ENCODE measurements at regions of chr1 and their contacts with region 1.

Region 1: GRCh38 chr1:117059678-117060440 is at the start of gene TTF2:
- DNase-seq: peak; percentile 95
- H3K4me3 ChIP-seq: peak within 1 kb of the TSS; percentile 57 to 84 (median 64)
- H3K27ac ChIP-seq: peak within 1 kb of the TSS in 2 of 3 donors; percentile 20 to 30
- H3K4me1 ChIP-seq: peaks cover 6 to 8% of the 10 kb centered on the region in 2 donors
- H3K27me3 ChIP-seq: no peaks in the 10 kb centered on the region
- CTCF ChIP-seq: peak in 2 of 6 experiments; percentile 19 to 24
- POLR2A ChIP-seq: peak; percentile 7 to 20
- total RNA-seq, gene TTF2: 6.0 to 32.3 (median 17.2) TPM

Region 2: DNA sequence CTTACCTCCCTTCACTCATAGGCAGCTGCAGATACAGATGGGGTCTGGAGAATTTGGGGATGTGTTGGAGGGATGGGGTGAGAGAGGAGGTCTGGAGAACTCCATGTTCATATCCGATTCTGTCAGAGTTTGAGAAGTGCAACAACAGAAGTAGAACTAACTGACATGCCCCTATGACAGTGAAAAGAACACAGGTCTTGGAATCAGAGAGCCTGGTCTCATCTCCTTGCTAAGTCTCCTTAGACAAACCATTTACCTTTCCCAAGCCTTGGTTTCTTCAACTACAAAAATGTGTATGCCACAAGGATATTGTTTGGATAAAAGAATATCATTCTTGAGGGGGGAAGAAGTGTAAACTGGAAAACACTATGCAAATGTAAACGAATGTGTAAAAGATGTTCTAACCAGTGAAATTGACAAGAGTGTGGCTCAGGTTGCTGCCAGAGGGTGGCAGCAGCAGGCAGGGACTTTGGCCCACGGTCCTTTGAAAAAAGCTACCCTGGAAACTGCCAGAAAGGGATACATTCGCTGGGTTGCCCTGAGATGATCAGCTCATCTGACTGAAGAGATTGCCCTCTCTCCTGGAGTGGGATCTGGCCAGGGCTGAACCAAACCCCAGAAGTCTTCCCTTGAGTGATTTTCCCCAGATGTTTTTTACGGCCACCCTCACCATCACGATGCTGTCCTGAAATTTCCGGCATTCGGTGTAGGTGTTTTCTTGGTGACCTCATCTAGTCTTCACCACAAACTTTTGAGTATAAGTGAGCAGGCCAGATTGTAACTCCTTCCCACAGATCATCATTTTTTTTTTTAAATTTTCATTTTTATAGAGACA is 322.6 kb before region 1 on chr1:
- intact Hi-C with region 1: loop called (anchors 5 kb)
- DNase-seq: peak; percentile 40 to 59
- H3K4me3 ChIP-seq: no peak overlapping the region
- H3K27ac ChIP-seq: no peak overlapping the region
- H3K4me1 ChIP-seq: no peaks in the 10 kb centered on the region
- H3K27me3 ChIP-seq: no peaks in the 10 kb centered on the region
- CTCF ChIP-seq: peak in 5 of 6 experiments; percentile 20 to 76 (median 66)
- POLR2A ChIP-seq: no peak